GM13977 (cell line): ENCODE measurements at regions of chr10 and their contacts with region 1.

Region 1: DNA sequence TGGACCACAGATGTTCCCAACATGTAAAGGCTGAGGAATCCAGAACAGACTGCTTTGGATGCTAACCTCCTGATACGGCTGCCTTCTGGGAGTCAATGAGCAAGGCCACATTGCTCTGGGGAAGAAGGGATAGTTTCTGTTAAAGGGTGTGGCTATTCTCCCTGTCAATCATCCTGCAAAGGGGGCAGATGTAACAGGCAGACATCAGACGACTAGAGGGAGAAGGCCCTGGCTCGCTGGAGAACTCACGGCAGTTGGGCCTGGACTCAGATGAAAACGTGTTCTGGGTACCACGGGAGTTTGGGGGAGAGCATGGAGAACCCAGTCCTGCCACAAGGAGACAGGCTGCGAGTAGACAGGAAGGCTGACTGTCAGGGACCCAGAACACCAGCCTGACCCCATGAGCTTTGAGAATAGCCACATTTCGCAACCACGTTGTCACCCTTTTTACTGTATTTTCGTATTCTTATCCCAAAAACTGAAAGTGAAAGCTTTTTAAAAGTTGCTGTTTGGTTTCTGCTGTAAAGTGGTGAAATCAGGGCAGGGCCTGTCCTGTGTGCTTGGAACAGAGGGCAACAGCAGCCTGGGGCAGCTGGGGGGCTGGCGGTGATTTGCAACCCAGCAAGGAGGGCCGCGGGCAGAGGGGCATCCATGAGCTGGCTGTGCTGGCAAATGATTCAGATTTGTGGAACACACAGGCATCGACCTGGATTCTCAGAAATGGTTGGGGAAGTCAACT is 95.3 kb downstream of the MYOF start:
- DNase-seq: no peak
- CTCF ChIP-seq: no peak

Region 2: DNA sequence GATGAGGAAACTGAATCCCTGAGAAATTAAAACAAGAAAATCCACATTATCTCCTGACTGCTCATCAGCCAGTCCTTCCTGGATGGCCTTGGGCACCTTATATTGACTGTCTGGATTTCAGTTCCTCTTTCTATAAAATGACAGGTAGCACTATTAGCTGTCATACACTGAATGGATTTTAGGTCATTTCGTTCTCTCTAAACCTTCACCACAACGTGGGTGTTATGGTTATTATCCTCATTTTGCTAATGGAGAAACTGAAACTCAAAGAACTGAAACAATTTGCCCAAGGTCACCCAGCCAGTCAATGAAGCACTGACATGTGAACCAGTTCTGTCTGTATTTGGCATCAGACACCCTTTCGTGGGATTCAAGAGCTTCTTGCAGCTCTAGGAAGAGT is 119.3 kb before region 1 on chr10:
- in situ Hi-C with region 1: no loop called
- DNase-seq: peak; percentile 69
- CTCF ChIP-seq: no peak

Region 3: GRCh38 chr10:93471110-93471651 is 84.4 kb after region 1 on chr10:
- in situ Hi-C with region 1: loop called (anchors 10 kb)
- DNase-seq: no peak
- CTCF ChIP-seq: no peak